ENCODE measurements at regions of chr20 and their contacts with region 1.

Region 1: DNA sequence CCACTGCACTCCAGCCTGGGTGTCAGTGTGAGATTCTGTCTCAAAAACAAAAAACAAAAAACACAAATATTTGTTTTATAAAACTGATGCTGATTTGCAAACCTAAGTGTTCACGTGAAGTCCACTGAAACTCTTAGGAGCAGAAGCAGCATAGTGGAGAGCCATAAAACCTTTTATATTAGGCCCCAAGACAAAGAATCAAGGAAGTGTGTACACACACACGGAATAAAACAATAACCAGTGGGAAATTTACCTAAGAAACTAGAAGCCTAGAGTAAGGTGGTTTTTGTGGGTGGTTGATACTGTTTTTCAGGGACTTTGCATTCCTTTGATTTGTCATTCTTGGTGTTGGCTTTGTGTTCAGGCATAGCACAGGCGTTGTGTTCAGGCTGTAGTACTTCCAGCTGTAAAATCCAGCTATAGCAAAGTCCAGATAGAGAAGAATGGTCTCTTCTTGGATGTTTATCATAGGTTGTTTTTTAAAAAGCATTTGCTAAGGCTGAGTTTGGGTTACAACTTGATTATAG is 61.3 kb downstream of the ATRN start:
- DNase-seq: no peak
- ATAC-seq: no peak

Region 2: DNA sequence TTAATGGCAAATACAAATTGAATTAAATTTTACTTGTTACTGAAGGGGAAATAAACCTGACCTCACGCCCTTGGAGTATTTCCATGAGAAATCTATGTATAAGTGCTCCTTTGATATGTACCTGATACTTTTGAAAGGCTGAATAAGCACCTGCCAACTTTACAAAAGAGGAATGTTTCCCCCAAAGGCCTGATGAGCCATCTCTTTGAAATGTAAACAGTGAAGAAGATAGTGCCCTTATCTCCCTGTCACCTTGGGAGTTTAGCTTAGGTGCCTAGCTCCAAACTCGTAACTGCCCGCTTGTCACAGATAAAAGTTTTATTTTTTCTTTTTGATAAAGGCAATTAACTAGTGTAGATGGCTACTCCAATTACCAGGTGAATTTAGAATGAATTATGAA is 1022.4 kb before region 1 on chr20:
- intact Hi-C with region 1: loop called (anchors 5 kb)
- DNase-seq: no peak
- ATAC-seq: no peak